Panc1 (cell line): ENCODE measurements at regions of chr2 and their contacts with region 1.

Region 1: DNA sequence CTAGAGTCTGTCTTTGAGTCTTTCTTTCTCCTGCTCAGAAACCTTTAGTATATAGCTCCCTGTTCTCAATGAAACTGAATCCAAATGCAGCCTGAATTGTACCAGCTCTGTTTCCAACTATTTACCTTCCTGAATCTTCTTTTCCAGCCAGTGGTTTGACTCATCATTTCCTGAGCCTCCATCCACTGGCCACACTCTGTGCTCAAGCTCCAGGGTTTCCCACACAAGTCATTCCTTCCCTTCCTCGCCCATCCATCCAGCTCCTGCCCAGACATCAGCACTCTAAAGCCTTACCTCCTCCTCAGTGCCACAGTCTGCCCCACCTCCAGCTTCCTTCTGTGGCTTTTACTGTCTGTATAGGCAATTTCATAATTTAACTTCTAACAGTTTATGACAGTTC is 233.6 kb upstream of the RASGRP3 start:
- DNase-seq: no peak
- ATAC-seq: no peak
- H3K4me3 ChIP-seq: no peak overlapping the region
- H3K27ac ChIP-seq: no peak overlapping the region
- H3K4me1 ChIP-seq: no peaks in the 10 kb centered on the region
- H3K27me3 ChIP-seq: no peaks in the 10 kb centered on the region
- CTCF ChIP-seq: no peak

Region 2: DNA sequence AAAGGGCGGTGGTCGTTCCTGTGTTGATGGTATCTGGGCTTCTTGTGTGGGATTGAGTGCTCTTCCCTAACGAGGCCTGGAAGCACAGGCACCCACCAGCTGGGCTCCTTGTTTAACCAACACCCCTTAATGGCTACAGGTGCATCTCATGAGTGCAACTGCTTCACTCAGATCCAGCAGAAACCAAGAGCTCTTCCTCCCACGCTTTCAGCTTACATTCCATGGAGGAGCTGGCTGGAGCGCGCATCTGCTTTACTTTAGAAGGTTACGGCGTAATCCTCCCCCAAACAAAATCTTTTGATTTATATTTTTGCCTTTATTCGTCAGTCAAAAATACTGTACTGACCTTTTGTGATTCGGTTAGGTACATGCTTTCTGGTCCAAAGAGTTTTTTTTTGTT is 121.4 kb before region 1 on chr2:
- CTCF ChIA-PET with region 1: no interaction called
- POLR2A ChIA-PET with region 1: interaction called, 10 read pairs
- in situ Hi-C with region 1: no loop called
- intact Hi-C with region 1: no loop called
- DNase-seq: no peak
- ATAC-seq: no peak
- H3K4me3 ChIP-seq: no peak overlapping the region
- H3K27ac ChIP-seq: no peak overlapping the region
- H3K4me1 ChIP-seq: no peaks in the 10 kb centered on the region
- H3K27me3 ChIP-seq: no peaks in the 10 kb centered on the region
- CTCF ChIP-seq: no peak